Ascending aorta (tissue), 2 donors: ENCODE measurements at regions of chr9 and their contacts with region 1.

Region 1: GRCh38 chr9:108478431-108478837 is 377.4 kb downstream of the ACTL7B start:
- DNase-seq: peak; percentile 25 to 83
- H3K4me3 ChIP-seq: peak overlapping the region in 1 of 2 donors; percentile 38
- H3K27ac ChIP-seq: peak overlapping the region; percentile 88 to 91
- H3K4me1 ChIP-seq: peaks cover 3 to 19% of the 10 kb centered on the region in 2 donors
- H3K27me3 ChIP-seq: no peaks in the 10 kb centered on the region
- CTCF ChIP-seq: no peak

Region 2: DNA sequence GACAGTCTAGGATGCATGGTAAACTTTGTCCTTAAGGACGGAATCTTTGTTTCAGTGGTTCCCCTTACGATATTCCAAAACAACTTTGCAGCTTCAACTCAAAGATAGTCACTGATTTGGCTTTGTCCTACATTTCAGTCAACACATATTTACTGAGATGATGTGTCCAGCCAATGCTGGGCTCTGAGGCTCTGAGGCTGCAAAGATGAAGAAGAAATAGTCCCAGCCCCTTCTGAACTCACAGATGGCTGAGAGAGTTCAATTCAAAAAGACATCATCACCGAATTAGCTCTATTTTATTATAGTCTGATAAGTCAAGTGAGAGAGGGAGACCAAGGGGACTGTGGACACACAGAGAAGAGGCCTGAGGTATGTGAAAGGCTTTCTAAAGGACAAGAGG is 166.7 kb before region 1 on chr9:
- intact Hi-C with region 1: no loop called
- DNase-seq: no peak
- H3K4me3 ChIP-seq: no peak overlapping the region
- H3K27ac ChIP-seq: no peak overlapping the region
- H3K4me1 ChIP-seq: no peaks in the 10 kb centered on the region
- H3K27me3 ChIP-seq: no peaks in the 10 kb centered on the region
- CTCF ChIP-seq: no peak

Region 3: DNA sequence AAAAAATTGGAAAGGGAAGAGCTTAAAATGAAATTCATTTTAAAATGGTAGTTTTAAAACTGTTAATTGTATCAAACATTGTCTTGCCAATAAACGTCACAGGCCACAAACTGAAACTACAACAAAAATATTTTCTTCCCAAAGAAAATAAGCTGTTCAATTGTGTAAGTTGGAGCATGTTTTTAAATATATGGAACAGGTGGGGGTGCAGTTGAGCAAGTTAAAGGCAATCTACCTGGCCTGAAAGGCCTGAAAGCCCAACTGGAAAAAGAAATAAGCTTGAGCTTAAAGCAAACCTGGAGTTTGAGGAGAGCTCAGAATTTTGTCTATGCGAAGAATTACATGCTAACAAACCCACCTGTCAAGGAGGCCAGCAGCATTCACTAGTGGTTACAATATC is 62.1 kb before region 1 on chr9:
- intact Hi-C with region 1: no loop called
- DNase-seq: no peak
- H3K4me3 ChIP-seq: no peak overlapping the region
- H3K27ac ChIP-seq: no peak overlapping the region
- H3K4me1 ChIP-seq: no peaks in the 10 kb centered on the region
- H3K27me3 ChIP-seq: no peaks in the 10 kb centered on the region
- CTCF ChIP-seq: no peak

Region 4: GRCh38 chr9:108444400-108445358 is 33.8 kb before region 1 on chr9:
- intact Hi-C with region 1: loop called (anchors 2 kb)
- DNase-seq: peak; percentile 10 to 75
- H3K4me3 ChIP-seq: peak overlapping the region in 1 of 2 donors; percentile 16
- H3K27ac ChIP-seq: peak overlapping the region; percentile 63 to 69
- H3K4me1 ChIP-seq: peaks cover 0 to 37% of the 10 kb centered on the region in 2 donors
- H3K27me3 ChIP-seq: no peaks in the 10 kb centered on the region
- CTCF ChIP-seq: no peak

Region 5: DNA sequence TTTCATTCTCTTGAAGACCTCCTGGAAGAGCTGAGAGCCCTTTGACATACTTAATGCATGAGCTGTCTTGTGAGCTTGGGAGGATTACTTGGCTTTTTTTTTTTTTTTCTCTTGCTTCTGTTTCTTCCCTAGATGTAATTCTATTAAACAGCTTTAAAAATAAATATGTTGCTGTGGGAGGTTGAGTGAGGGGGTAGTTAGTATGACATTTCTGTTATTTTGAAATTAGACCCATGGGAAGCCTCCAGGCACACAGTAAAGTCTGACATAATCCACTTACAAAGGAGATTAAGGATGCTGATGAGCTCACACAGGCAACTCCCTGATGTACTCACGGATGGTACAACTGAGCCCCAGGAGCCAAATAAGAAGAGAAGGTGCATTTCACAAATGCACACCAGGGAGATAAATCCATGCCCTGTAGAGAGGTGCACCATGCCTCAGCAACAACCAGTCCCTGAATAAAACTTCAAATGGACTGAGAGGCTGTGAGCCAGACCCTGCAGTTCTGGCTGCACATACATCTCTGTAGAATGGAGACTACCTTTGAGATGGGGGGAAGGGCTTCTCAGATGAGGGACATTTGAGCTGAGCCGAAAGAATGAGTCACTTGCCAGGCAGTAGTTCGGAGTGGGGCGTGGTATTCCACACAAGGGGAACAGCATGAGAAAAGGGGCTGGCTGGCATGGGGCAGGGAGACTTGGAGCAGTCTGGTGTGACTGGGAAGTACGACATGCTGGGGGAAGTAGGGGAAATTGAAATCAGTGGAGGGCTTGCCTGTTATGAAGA is 308.7 kb after region 1 on chr9:
- intact Hi-C with region 1: loop called (anchors 10 kb)
- DNase-seq: no peak
- H3K4me3 ChIP-seq: no peak overlapping the region
- H3K27ac ChIP-seq: no peak overlapping the region
- H3K4me1 ChIP-seq: peaks cover 0 to 6% of the 10 kb centered on the region in 2 donors
- H3K27me3 ChIP-seq: no peaks in the 10 kb centered on the region
- CTCF ChIP-seq: no peak